ENCODE measurements at regions of chr1 and their contacts with region 1.

Region 1: GRCh38 chr1:226662642-226663326 is 76.3 kb downstream of the ITPKB start:
- DNase-seq: peak; percentile 84 to 99 (median 86)
- H3K4me3 ChIP-seq: no peak overlapping the region
- H3K4me3 Mint-ChIP-seq: peak overlapping the region; percentile 57 to 88 (median 76)
- H3K27ac ChIP-seq: peak overlapping the region; percentile 74
- H3K27ac Mint-ChIP-seq: peak overlapping the region in 6 of 7 donors; percentile 96 to 99 (median 97)
- H3K4me1 ChIP-seq: no peaks in the 10 kb centered on the region
- H3K4me1 Mint-ChIP-seq: peaks cover 0 to 90% (median 38%) of the 10 kb centered on the region in 4 donors
- H3K27me3 ChIP-seq: no peaks in the 10 kb centered on the region
- H3K27me3 Mint-ChIP-seq: no peaks in the 10 kb centered on the region

Region 2: DNA sequence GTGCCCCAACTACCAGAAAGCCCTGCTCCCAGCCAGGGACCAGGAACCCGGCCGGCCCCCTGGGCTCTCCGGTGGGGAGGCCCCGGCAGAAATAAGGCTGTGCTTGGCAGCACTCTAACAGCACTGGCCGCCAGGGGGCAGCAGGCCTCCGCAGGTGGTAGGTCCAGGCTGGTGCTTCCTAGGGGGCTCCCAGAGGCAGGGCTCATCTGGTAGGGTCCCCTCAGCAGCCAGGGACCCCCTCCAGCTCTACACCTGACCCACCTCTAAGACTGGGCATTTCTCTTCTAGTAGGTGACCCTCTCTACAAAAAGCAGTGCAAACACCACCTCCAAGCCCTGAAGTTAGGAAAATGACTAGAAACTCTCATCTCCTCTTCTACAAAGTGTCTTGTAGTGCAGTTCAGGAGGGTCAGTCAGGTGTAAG is 28.6 kb before region 1 on chr1:
- CTCF ChIA-PET with region 1: interaction called, 21 read pairs
- POLR2A ChIA-PET with region 1: interaction called, 8 read pairs
- intact Hi-C with region 1: loop called (anchors 2 kb)
- DNase-seq: peak; percentile 74 to 81 (median 78)
- H3K4me3 ChIP-seq: no peak overlapping the region
- H3K4me3 Mint-ChIP-seq: peak overlapping the region in 7 of 8 donors; percentile 1 to 82 (median 53)
- H3K27ac ChIP-seq: peak overlapping the region; percentile 56
- H3K27ac Mint-ChIP-seq: peak overlapping the region; percentile 72 to 94 (median 88)
- H3K4me1 ChIP-seq: peaks cover 53% of the 10 kb centered on the region
- H3K4me1 Mint-ChIP-seq: peaks cover 28 to 70% (median 53%) of the 10 kb centered on the region in 4 donors
- H3K27me3 ChIP-seq: no peaks in the 10 kb centered on the region
- H3K27me3 Mint-ChIP-seq: no peaks in the 10 kb centered on the region

Region 3: GRCh38 chr1:226642876-226643576 is 19.8 kb before region 1 on chr1:
- CTCF ChIA-PET with region 1: interaction called, 4 read pairs
- POLR2A ChIA-PET with region 1: interaction called, 20 read pairs
- intact Hi-C with region 1: no loop called
- DNase-seq: peak in 1 of 5 donors; percentile 80
- H3K4me3 ChIP-seq: no peak overlapping the region
- H3K4me3 Mint-ChIP-seq: peak overlapping the region in 7 of 8 donors; percentile 26 to 76 (median 62)
- H3K27ac ChIP-seq: peak overlapping the region; percentile 42
- H3K27ac Mint-ChIP-seq: peak overlapping the region in 6 of 7 donors; percentile 87 to 92 (median 90)
- H3K4me1 ChIP-seq: peaks cover 59% of the 10 kb centered on the region
- H3K4me1 Mint-ChIP-seq: peaks cover 30 to 76% (median 48%) of the 10 kb centered on the region in 4 donors
- H3K27me3 ChIP-seq: no peaks in the 10 kb centered on the region
- H3K27me3 Mint-ChIP-seq: no peaks in the 10 kb centered on the region

Region 4: GRCh38 chr1:226702957-226703831 is 40.4 kb after region 1 on chr1:
- CTCF ChIA-PET with region 1: interaction called, 4 read pairs
- POLR2A ChIA-PET with region 1: interaction called, 8 read pairs
- intact Hi-C with region 1: loop called (anchors 1 kb)
- DNase-seq: peak; percentile 83 to 89 (median 86)
- H3K4me3 ChIP-seq: peak overlapping the region; percentile 21 to 68
- H3K4me3 Mint-ChIP-seq: peak overlapping the region; percentile 81 to 88 (median 85)
- H3K27ac ChIP-seq: peak overlapping the region; percentile 86
- H3K27ac Mint-ChIP-seq: peak overlapping the region; percentile 88 to 98 (median 96)
- H3K4me1 ChIP-seq: peaks cover 87% of the 10 kb centered on the region
- H3K4me1 Mint-ChIP-seq: peaks cover 59 to 92% (median 81%) of the 10 kb centered on the region in 4 donors
- H3K27me3 ChIP-seq: no peaks in the 10 kb centered on the region
- H3K27me3 Mint-ChIP-seq: no peaks in the 10 kb centered on the region